K562 (cell line): ENCODE measurements at regions of chr14 and their contacts with region 1.

Region 1: DNA sequence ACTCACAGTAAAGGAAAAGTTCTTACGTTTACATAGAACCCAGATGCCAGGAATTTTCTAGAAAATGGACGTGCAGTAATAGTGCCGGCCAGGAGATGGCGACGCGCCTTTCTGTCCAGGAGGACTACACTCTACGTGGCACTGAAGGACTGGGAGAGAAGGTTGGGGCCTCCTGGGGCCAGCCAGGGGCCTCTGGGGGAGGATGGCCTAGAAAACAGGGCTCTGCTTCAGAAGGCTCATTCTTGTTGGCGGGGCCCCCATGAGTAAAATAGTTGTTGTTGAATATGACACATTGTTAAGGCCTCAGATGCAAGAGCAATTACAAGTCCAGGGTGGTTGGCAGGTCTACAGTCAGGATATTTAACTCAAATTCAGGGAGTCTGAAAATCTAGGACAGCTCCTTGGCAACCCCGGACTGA is 120.1 kb upstream of the MAX start:
- DNase-seq: peak; percentile 52 to 65 (median 57)
- ATAC-seq: peak; percentile 93
- H3K4me3 ChIP-seq: no peak overlapping the region
- H3K27ac ChIP-seq: no peak overlapping the region
- H3K4me1 ChIP-seq: no peaks in the 10 kb centered on the region
- H3K27me3 ChIP-seq: no peaks in the 10 kb centered on the region
- CTCF ChIP-seq: peak; percentile 72 to 80 (median 80)
- EP300 ChIP-seq: no peak
- POLR2A ChIP-seq: no peak
- RAD21 ChIP-seq: peak; percentile 74 to 86

Region 2: GRCh38 chr14:65373679-65374039 is 151.2 kb after region 1 on chr14:
- CTCF ChIA-PET with region 1: no interaction called
- POLR2A ChIA-PET with region 1: no interaction called
- in situ Hi-C with region 1: no loop called
- intact Hi-C with region 1: loop called (anchors 10 kb)
- DNase-seq: no peak
- ATAC-seq: peak; percentile 35; the same call in 2 of the 3 replicates
- H3K4me3 ChIP-seq: no peak overlapping the region
- H3K27ac ChIP-seq: no peak overlapping the region
- H3K4me1 ChIP-seq: no peaks in the 10 kb centered on the region; a peak in 2 of 5 replicates
- H3K27me3 ChIP-seq: no peaks in the 10 kb centered on the region
- CTCF ChIP-seq: peak in 2 of 3 experiments; percentile 10 to 13; a peak in 1 of 6 replicates
- EP300 ChIP-seq: no peak
- POLR2A ChIP-seq: no peak
- RAD21 ChIP-seq: peak in 1 of 2 experiments; percentile 31; a peak in 2 of 4 replicates

Region 3: DNA sequence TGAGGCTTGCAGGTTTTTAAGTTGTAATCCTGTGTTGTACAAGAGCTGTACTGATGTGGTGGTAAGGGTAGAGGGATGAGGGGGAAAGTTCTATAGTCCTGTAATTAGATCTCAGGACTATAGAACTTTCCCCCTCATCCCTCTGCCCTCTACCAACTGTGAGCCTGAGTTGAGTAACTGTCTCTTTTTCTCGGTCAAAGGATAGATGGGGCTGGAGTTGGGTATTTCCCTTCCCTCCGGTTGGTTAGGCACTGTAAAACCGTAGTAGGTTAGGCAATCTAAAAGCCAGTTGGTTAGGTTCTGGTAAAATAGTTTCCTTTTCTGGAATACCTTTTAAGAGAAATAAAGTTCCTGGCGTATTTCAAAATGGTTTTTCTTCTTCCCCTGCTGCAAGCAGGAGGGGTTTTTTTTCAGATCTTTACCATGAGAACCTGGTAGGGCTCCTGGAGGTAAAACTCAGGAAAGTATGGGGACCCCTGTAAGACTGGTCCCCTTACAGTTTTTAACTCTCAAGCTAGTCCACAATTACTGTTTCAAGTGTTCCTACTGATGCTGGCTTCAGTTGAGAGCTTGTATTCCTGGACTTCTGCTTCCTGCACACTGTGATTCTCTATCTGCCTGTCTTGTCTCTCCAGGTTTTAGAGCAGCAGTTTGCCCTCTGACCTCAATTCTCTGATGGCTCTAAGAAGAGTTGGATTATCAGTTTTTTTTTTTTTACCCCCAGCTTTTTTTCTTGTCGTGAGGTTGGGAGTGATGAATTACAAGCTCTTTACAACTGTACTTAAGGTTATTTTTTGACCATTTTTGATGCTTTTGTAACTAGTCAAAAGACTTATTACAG is 248.8 kb after region 1 on chr14:
- CTCF ChIA-PET with region 1: no interaction called
- POLR2A ChIA-PET with region 1: no interaction called
- in situ Hi-C with region 1: no loop called
- intact Hi-C with region 1: no loop called
- DNase-seq: peak in 3 of 4 experiments; percentile 8 to 52 (median 9)
- ATAC-seq: peak; percentile 61
- H3K4me3 ChIP-seq: no peak overlapping the region
- H3K27ac ChIP-seq: no peak overlapping the region
- H3K4me1 ChIP-seq: peaks cover 4 to 13% of the 10 kb centered on the region in 2 experiments; a peak in 3 of 5 replicates
- H3K27me3 ChIP-seq: no peaks in the 10 kb centered on the region
- CTCF ChIP-seq: no peak
- EP300 ChIP-seq: no peak
- POLR2A ChIP-seq: no peak
- RAD21 ChIP-seq: no peak

Region 4: GRCh38 chr14:65824285-65824977 is 602.0 kb after region 1 on chr14:
- CTCF ChIA-PET with region 1: no interaction called
- POLR2A ChIA-PET with region 1: no interaction called
- in situ Hi-C with region 1: no loop called
- intact Hi-C with region 1: loop called (anchors 10 kb)
- DNase-seq: peak; percentile 54 to 66 (median 62)
- ATAC-seq: peak; percentile 87
- H3K4me3 ChIP-seq: no peak overlapping the region
- H3K27ac ChIP-seq: no peak overlapping the region
- H3K4me1 ChIP-seq: no peaks in the 10 kb centered on the region
- H3K27me3 ChIP-seq: peaks cover 9 to 27% of the 10 kb centered on the region in 2 experiments; a peak in 4 of 5 replicates
- CTCF ChIP-seq: peak; percentile 60 to 74 (median 65)
- EP300 ChIP-seq: no peak
- POLR2A ChIP-seq: no peak
- RAD21 ChIP-seq: peak; percentile 67 to 69

Region 5: DNA sequence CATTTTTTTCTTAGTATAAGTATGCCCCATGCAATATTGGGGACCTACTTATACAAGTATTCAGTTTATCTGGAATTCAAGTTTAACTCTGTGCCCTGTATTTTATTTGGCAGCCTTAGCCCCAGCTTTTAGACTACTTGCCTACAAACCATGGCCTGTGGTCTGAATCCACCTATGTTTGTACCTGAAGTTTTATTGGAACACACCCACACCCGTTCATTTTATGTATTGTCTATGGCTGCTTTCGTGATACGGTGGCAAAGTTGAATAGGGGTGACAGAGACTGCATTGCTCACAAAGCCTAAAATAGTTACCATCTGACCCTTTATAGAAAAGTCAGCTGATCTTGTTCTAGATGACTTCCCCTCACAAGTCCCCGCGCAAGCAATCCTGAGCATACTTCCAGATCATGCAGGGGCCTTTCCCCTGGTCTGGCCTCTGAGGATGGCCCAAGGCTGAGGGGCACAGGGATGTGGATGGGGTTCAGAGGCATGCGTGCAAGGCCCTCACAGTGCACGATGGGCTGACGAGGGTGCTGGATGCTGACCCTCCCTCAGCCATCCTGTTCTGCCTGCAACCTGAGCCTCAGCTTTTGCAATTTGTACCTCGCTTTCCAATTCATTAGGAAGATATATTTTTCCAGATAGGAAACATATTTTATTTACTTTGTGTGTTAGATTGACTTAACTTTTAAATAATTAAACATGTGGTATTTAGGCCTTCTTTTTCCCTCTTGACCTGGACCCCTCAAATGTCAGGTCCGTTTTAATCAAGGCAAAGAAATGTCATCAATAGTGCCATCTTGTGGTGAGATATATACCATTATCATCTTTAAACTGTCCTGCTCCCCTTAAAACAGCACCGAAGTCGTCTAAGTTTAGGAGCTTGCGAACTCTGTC is 736.5 kb after region 1 on chr14:
- CTCF ChIA-PET with region 1: no interaction called
- POLR2A ChIA-PET with region 1: no interaction called
- in situ Hi-C with region 1: no loop called
- intact Hi-C with region 1: loop called (anchors 5 kb)
- DNase-seq: peak; percentile 24 to 30 (median 26)
- ATAC-seq: peak; percentile 76
- H3K4me3 ChIP-seq: no peak overlapping the region
- H3K27ac ChIP-seq: no peak overlapping the region
- H3K4me1 ChIP-seq: no peaks in the 10 kb centered on the region
- H3K27me3 ChIP-seq: no peaks in the 10 kb centered on the region; a peak in 1 of 5 replicates
- CTCF ChIP-seq: peak in 1 of 3 experiments; percentile 50; a peak in 3 of 6 replicates
- EP300 ChIP-seq: no peak
- POLR2A ChIP-seq: no peak
- RAD21 ChIP-seq: peak; percentile 50 to 63